ENCODE measurements at regions of chr1 and their contacts with region 1.

Region 1: GRCh38 chr1:85867189-85867588 is 159.0 kb upstream of the ZNHIT6 start:
- DNase-seq: no peak
- ATAC-seq: no peak
- H3K4me3 ChIP-seq: no peak overlapping the region
- H3K4me3 Mint-ChIP-seq: no peak overlapping the region
- H3K27ac ChIP-seq: no peak overlapping the region
- H3K27ac Mint-ChIP-seq: no peak overlapping the region
- H3K4me1 ChIP-seq: no peaks in the 10 kb centered on the region
- H3K4me1 Mint-ChIP-seq: no peaks in the 10 kb centered on the region
- H3K27me3 ChIP-seq: no peaks in the 10 kb centered on the region
- H3K27me3 Mint-ChIP-seq: no peaks in the 10 kb centered on the region
- CTCF ChIP-seq: no peak

Region 2: DNA sequence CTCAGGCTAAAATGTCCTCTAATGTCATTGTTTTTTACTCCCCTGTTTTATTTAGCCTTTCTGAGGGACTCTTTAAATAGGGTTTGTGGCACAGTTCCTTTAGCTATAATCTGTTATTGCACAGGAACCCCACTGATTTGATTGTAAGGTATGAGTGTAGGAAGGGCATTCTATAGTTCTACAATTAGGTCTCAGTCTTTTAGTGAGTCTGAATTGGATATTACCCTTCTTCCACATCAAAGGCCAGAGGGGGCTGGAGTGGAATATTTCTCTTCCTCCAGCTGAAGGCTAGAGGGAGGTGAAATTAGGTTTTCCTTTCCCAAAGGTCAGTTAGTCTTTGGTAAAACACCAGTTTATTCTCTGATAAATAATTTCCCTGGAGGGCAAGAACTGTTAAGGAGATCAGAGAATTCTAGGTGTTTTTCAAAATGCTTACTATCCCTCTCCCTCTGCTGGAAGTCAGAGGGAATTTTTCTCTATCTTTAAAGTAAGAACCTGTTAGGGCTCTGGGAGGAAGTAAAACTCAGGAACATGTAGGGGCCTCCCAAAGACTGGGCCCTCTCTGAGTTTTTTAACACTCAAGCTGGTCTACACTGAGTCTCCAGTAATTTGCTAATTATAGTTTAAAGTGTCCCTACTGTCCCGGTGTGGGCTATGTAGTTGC is 17.3 kb after region 1 on chr1:
- CTCF ChIA-PET with region 1: no interaction called
- POLR2A ChIA-PET with region 1: no interaction called
- intact Hi-C with region 1: loop called in 1 of 2 experiments (anchors 1 kb)
- DNase-seq: no peak
- ATAC-seq: no peak
- H3K4me3 ChIP-seq: no peak overlapping the region
- H3K4me3 Mint-ChIP-seq: no peak overlapping the region
- H3K27ac ChIP-seq: no peak overlapping the region
- H3K27ac Mint-ChIP-seq: no peak overlapping the region
- H3K4me1 ChIP-seq: no peaks in the 10 kb centered on the region
- H3K4me1 Mint-ChIP-seq: no peaks in the 10 kb centered on the region
- H3K27me3 ChIP-seq: no peaks in the 10 kb centered on the region
- H3K27me3 Mint-ChIP-seq: no peaks in the 10 kb centered on the region
- CTCF ChIP-seq: no peak

Measured in CD4-positive, alpha-beta T cell (primary cell).